ENCODE measurements at regions of chr12 and their contacts with region 1.

Region 1: DNA sequence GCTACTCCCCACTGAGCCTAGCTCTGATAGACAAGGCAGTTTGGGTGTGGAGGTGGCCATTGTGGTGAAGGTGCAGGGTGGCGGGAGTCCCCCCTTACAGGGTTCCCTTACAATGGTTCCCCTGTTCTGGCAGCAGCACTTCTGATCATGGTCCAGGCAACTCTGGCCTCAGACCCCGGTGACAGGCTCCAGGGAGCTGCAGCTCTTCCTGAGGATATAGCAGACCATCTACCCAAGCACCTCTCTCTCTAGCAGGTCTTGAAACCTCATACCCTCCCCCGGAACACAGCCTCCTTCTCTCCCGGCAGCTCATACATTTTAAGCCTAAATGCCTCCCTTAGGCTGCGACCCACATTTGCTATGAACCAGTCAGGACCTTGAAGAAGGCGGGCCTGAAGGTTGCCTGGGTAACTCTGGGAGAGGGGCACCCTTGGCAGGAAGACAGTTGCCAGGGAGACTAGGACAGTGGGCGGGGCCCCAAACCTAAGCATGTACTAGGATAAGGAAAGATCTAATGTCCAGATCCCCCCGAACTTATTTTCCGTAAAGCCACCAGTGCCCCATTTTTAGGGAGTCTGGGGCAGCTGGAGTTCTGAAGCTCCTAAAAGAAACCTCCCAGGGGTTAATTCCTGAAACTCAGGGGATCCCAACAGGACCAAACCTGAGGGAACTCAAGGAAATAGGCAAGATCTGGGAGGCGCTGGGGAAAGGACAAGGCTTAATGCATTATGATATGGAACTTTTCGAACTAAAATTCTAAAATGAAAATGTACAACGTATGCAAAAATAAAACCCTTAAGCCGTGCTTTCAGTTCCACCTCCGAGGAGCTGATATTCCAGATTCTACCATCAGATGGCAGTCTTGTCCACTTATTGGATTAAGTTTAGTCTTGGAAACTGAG is 4.5 kb upstream of the GDF11 start:
- DNase-seq: no peak
- H3K4me3 ChIP-seq: peak overlapping the region; percentile 77
- H3K27ac ChIP-seq: peak overlapping the region; percentile 78
- H3K27me3 ChIP-seq: no peaks in the 10 kb centered on the region
- CTCF ChIP-seq: peak; percentile 74

Region 2: GRCh38 chr12:55687746-55688145 is 50.6 kb before region 1 on chr12:
- CTCF ChIA-PET with region 1: no interaction called
- POLR2A ChIA-PET with region 1: no interaction called
- DNase-seq: no peak
- H3K4me3 ChIP-seq: no peak overlapping the region
- H3K27ac ChIP-seq: no peak overlapping the region
- H3K27me3 ChIP-seq: peaks cover 8% of the 10 kb centered on the region
- CTCF ChIP-seq: no peak

Region 3: GRCh38 chr12:55797068-55797467 is 58.7 kb after region 1 on chr12:
- CTCF ChIA-PET with region 1: interaction called, 82 read pairs
- POLR2A ChIA-PET with region 1: no interaction called
- DNase-seq: no peak
- H3K4me3 ChIP-seq: no peak overlapping the region
- H3K27ac ChIP-seq: no peak overlapping the region
- H3K27me3 ChIP-seq: no peaks in the 10 kb centered on the region
- CTCF ChIP-seq: peak; percentile 61

Region 4: GRCh38 chr12:55829967-55830600 is 91.7 kb after region 1 on chr12:
- CTCF ChIA-PET with region 1: interaction called, 10 read pairs
- POLR2A ChIA-PET with region 1: interaction called, 3 read pairs
- DNase-seq: no peak
- H3K4me3 ChIP-seq: peak overlapping the region; percentile 91
- H3K27ac ChIP-seq: peak overlapping the region; percentile 81
- H3K27me3 ChIP-seq: no peaks in the 10 kb centered on the region
- CTCF ChIP-seq: no peak

Region 5: DNA sequence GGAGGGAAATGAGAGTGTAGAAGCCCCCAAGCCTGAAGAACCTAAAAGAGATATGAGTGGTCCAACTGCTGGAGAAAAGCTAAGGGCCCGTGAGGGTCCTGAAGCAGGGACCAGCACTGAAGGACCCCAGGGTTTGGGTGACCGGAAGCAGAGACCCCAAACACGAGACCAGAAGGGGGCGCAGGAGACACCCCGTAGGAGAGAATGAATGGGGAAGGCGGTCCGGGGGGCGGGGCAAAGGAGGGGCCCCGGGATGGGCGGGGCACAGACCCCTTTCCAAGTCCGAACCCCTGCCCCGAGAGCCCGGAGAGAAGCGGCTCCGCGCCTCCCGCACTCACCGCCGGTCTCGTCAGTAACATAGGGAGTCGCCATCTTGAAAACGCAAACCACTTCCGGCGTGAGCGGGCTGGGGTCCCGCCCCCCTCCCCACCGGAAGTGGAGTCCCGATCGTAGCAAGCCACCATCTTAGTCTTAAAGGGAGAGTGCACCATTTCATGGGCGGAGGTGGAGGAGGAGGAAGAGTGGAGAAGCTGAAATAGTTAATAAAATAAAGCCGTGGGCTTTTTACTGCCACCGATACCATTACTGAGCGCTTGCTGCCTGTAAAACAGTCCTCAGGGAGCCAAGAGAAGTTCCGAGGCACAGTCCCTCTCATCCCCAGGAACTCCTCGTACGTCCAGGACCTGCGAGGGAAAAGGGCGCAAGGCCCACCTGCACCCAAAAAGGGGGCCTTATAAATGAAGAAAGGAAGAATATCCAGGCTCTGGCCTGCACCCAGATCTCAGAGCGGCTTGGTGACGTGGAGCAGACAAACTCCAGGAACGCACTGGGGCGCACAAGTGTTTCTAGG is 188.6 kb after region 1 on chr12:
- CTCF ChIA-PET with region 1: interaction called, 19 read pairs
- POLR2A ChIA-PET with region 1: interaction called, 5 read pairs
- DNase-seq: peak; percentile 74
- H3K4me3 ChIP-seq: peak overlapping the region; percentile 97
- H3K27ac ChIP-seq: peak overlapping the region; percentile 93
- H3K27me3 ChIP-seq: no peaks in the 10 kb centered on the region
- CTCF ChIP-seq: peak; percentile 86

Region 6: GRCh38 chr12:55940065-55940732 is 201.8 kb after region 1 on chr12:
- CTCF ChIA-PET with region 1: interaction called, 93 read pairs
- POLR2A ChIA-PET with region 1: interaction called, 4 read pairs
- DNase-seq: peak; percentile 60
- H3K4me3 ChIP-seq: no peak overlapping the region; the same call in 1 of the 2 replicates
- H3K27ac ChIP-seq: no peak overlapping the region
- H3K27me3 ChIP-seq: no peaks in the 10 kb centered on the region
- CTCF ChIP-seq: peak; percentile 93

Region 7: DNA sequence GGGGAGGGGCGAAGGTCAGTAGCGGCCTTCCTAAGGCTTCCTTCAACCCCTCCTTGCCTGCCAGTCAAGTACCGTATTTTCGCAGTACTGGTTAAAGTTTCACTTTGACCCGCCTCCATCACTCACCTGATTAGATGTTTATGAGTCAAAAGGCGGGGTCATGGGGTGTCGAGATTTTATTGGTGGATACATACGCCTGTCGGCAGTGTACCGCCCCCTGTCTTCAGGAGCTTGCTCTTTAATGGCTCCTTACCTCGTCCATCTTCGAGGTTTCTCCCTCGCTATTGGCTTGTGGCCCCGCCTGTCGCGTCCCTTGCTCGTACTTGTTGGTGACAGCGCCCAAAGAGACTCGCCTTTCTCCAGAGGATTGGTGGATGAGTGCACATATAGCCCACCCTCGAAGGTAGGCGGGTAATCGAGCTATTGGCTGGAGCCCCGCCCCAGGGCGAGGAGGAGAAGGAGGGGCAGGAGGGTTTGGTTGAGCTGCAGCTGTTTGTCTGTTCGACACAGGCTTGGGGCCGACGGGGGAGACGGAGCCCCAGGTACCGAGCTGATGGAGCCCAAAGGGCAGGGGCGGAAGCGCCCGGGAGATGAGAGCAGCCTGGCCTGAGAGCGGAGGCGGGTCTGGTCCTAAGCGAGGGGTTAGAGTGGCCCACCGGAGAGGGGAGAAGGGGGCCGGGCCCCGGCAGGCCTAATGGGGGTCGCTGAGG is 235.4 kb after region 1 on chr12 and contains the start of gene RAB5B:
- CTCF ChIA-PET with region 1: interaction called, 10 read pairs
- POLR2A ChIA-PET with region 1: interaction called, 3 read pairs
- DNase-seq: peak; percentile 100
- H3K4me3 ChIP-seq: peak within 1 kb of the TSS; percentile 94
- H3K27ac ChIP-seq: peak within 1 kb of the TSS; percentile 87
- H3K27me3 ChIP-seq: no peaks in the 10 kb centered on the region
- CTCF ChIP-seq: peak; percentile 29; the same call in 1 of the 2 replicates
- polyA plus RNA-seq, gene RAB5B: 136 and 157 TPM in 2 replicates

Region 8: DNA sequence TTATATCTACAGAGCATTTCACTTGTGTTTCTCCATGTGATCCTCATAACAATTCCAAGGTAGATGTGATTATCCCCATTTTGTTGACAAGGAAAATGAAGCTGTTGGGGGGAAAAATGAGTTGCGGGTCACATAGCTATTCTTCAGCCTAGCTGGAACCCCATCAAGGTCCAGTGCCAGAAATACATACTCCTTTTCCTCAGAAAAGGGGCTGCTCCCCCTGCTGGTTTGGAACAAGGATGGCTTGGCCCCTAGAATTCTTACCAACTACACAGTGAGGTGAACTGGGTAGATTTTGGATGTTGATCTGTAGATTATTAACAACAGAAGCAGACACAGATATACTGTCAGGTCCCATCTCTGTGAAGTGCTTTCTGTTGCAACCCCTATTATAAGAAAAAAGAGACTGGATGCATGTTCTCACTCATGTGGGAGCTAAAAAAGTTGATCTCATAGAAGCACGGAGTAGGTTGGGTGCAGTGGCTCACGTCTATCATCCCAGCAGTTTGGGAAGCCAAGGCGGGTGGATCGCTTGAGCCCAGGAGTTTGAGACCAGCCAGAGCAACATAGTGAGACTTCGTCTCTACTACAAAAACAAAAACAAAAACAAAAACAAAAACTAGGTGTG is 291.4 kb after region 1 on chr12:
- CTCF ChIA-PET with region 1: interaction called, 49 read pairs
- POLR2A ChIA-PET with region 1: no interaction called
- DNase-seq: no peak
- H3K4me3 ChIP-seq: no peak overlapping the region
- H3K27ac ChIP-seq: no peak overlapping the region
- H3K27me3 ChIP-seq: no peaks in the 10 kb centered on the region
- CTCF ChIP-seq: peak; percentile 89

Measured in AG04450 (cell line).